CD8-positive, alpha-beta memory T cell (primary cell): ENCODE measurements at regions of chr6 and their contacts with region 1.

Region 1: GRCh38 chr6:47477497-47478232 is at the start of gene CD2AP:
- DNase-seq: peak; percentile 91 to 96 (median 95)
- H3K4me3 ChIP-seq: peak within 1 kb of the TSS; percentile 60
- H3K4me3 Mint-ChIP-seq: peak within 1 kb of the TSS; percentile 90 to 99 (median 96)
- H3K27ac ChIP-seq: peak within 1 kb of the TSS; percentile 96
- H3K27ac Mint-ChIP-seq: peak within 1 kb of the TSS; percentile 93 to 99 (median 97)
- H3K4me1 ChIP-seq: peaks cover 34% of the 10 kb centered on the region
- H3K4me1 Mint-ChIP-seq: peaks cover 35 to 52% (median 45%) of the 10 kb centered on the region in 3 donors
- H3K27me3 ChIP-seq: no peaks in the 10 kb centered on the region
- H3K27me3 Mint-ChIP-seq: peaks cover 0 to 2% of the 10 kb centered on the region in 2 donors
- total RNA-seq, gene CD2AP: 28.8 to 30.7 TPM

Region 2: DNA sequence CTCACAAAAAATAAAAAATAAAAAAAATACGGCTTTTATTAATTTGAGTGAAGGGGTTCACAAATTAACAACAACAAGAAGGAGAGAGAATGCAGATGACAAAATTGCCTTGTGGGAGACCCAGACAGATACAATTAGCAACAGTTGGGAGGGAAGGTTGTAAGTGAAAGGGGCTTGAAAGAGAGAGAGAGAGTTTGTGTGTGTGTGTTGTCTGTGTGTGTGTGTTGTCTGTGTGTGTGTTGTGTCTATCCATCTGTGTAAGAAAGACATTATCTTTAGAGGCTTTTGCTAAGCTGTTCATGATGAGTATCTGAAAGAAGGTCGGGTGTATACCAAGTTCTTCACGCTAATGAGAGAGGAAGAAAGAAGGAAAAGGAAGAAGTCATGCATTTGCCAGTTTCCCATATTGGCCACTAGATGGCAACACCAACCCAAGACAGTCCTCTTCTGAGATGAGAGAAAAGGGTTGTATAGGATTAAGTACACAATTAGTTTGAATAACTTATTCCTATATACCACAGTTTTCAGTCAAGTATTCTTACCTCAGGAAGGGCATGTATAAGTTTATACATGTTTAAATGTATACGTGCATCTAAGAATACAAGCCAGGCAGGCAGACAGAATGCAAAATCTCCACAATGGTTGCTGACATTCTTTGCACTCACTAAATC is 63.8 kb before region 1 on chr6:
- CTCF ChIA-PET with region 1: interaction called, 16 read pairs
- POLR2A ChIA-PET with region 1: interaction called, 12 read pairs
- DNase-seq: peak in 4 of 5 donors; percentile 15 to 59 (median 54)
- H3K4me3 ChIP-seq: peak overlapping the region; percentile 55
- H3K4me3 Mint-ChIP-seq: peak overlapping the region; percentile 76 to 89 (median 82)
- H3K27ac ChIP-seq: peak overlapping the region; percentile 25
- H3K27ac Mint-ChIP-seq: peak overlapping the region in 7 of 8 donors; percentile 1 to 82 (median 50)
- H3K4me1 ChIP-seq: peaks cover 4% of the 10 kb centered on the region
- H3K4me1 Mint-ChIP-seq: peaks cover 18 to 21% (median 20%) of the 10 kb centered on the region in 3 donors
- H3K27me3 ChIP-seq: no peaks in the 10 kb centered on the region
- H3K27me3 Mint-ChIP-seq: no peaks in the 10 kb centered on the region

Region 3: DNA sequence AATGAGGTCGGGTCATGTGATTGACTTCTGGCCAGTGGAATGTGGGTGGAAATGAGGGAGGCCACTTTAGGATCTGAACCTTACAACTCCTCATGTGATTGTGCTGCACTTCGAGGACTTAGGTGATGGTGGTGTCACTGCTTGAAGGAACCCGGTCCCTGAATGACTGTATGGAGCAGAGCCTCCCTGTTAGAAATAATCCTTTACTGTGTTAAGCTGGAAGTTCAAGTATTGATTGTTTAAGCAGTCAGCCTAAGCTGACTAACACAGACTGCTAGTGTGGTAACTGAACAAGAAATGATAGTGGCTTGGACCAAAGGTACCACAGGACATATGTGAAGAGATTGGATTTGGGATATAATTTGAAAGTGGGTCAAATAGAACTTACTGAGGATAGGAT is 442.2 kb after region 1 on chr6:
- CTCF ChIA-PET with region 1: no interaction called
- POLR2A ChIA-PET with region 1: no interaction called
- DNase-seq: no peak
- H3K4me3 ChIP-seq: no peak overlapping the region
- H3K4me3 Mint-ChIP-seq: no peak overlapping the region
- H3K27ac ChIP-seq: no peak overlapping the region
- H3K27ac Mint-ChIP-seq: no peak overlapping the region
- H3K4me1 ChIP-seq: no peaks in the 10 kb centered on the region
- H3K4me1 Mint-ChIP-seq: no peaks in the 10 kb centered on the region
- H3K27me3 ChIP-seq: no peaks in the 10 kb centered on the region
- H3K27me3 Mint-ChIP-seq: no peaks in the 10 kb centered on the region

Region 4: DNA sequence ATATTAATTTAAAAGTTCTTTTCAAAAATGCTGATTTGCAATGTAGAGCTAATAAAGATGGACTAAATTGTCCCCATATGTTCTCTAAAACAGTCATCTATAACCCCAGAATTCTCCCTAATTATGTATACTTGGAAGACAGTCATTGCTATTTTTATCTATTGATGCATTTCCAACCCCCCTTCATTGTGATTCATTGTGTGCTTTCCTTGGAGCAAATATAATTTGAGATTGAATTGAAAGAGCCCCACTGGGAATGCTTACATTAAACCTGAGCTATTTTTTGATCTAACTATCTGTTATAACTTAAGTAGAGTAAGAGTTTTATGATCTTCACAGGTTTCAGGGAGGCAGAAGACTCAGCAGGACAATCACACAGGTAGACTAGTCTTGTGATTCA is 707.0 kb after region 1 on chr6:
- CTCF ChIA-PET with region 1: no interaction called
- POLR2A ChIA-PET with region 1: no interaction called
- DNase-seq: no peak
- H3K4me3 ChIP-seq: no peak overlapping the region
- H3K4me3 Mint-ChIP-seq: no peak overlapping the region
- H3K27ac ChIP-seq: no peak overlapping the region
- H3K27ac Mint-ChIP-seq: no peak overlapping the region
- H3K4me1 ChIP-seq: no peaks in the 10 kb centered on the region
- H3K4me1 Mint-ChIP-seq: no peaks in the 10 kb centered on the region
- H3K27me3 ChIP-seq: no peaks in the 10 kb centered on the region
- H3K27me3 Mint-ChIP-seq: no peaks in the 10 kb centered on the region